ENCODE measurements at regions of chr16 and their contacts with region 1.

Region 1: GRCh38 chr16:52191531-52192134 is 355.3 kb downstream of the TOX3 start:
- DNase-seq: peak; percentile 58
- ATAC-seq: peak; percentile 88
- H3K4me3 ChIP-seq: no peak overlapping the region
- H3K27ac ChIP-seq: no peak overlapping the region
- H3K4me1 ChIP-seq: no peaks in the 10 kb centered on the region
- H3K27me3 ChIP-seq: no peaks in the 10 kb centered on the region
- CTCF ChIP-seq: peak; percentile 88
- POLR2A ChIP-seq: no peak
- RAD21 ChIP-seq: peak; percentile 74

Region 2: GRCh38 chr16:51818342-51818944 is 373.2 kb before region 1 on chr16:
- CTCF ChIA-PET with region 1: no interaction called
- POLR2A ChIA-PET with region 1: no interaction called
- dilution Hi-C with region 1: no loop called
- in situ Hi-C with region 1: no loop called
- intact Hi-C with region 1: loop called (anchors 2 kb)
- DNase-seq: peak; percentile 73
- ATAC-seq: peak; percentile 61
- H3K4me3 ChIP-seq: no peak overlapping the region
- H3K27ac ChIP-seq: peak overlapping the region; percentile 57
- H3K4me1 ChIP-seq: peaks cover 2% of the 10 kb centered on the region; the same call in 1 of the 2 replicates
- H3K27me3 ChIP-seq: no peaks in the 10 kb centered on the region
- CTCF ChIP-seq: peak; percentile 89
- POLR2A ChIP-seq: no peak
- RAD21 ChIP-seq: peak; percentile 91

Region 3: DNA sequence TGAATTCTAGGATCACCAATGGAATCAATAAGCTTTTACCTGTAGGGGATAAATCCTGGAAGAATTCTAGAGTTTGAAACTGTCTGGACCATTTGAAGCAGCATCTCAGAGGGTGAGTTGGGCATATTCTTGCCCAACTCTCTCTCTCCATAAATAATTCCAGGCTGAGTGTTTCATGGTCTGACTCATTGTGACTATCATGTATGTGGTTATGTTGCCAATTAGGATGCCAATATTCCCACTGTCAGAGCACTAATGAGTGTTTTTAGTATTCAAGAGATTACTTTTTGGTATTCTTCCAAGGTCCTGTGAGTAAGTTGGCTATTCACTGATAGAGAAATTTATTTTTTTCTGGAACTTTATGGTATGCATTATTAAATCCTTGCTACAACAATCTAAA is 101.6 kb before region 1 on chr16:
- CTCF ChIA-PET with region 1: no interaction called
- POLR2A ChIA-PET with region 1: no interaction called
- dilution Hi-C with region 1: no loop called
- in situ Hi-C with region 1: loop called (anchors 25 kb)
- intact Hi-C with region 1: no loop called
- DNase-seq: peak; percentile 0
- ATAC-seq: no peak
- H3K4me3 ChIP-seq: no peak overlapping the region
- H3K27ac ChIP-seq: no peak overlapping the region
- H3K4me1 ChIP-seq: no peaks in the 10 kb centered on the region
- H3K27me3 ChIP-seq: no peaks in the 10 kb centered on the region
- CTCF ChIP-seq: no peak
- POLR2A ChIP-seq: no peak
- RAD21 ChIP-seq: no peak

Region 4: GRCh38 chr16:52912565-52913173 is 721.0 kb after region 1 on chr16:
- CTCF ChIA-PET with region 1: interaction called, 7 read pairs
- POLR2A ChIA-PET with region 1: no interaction called
- dilution Hi-C with region 1: no loop called
- in situ Hi-C with region 1: loop called (anchors 25 kb)
- intact Hi-C with region 1: loop called (anchors 1 kb)
- DNase-seq: peak; percentile 49
- ATAC-seq: peak; percentile 54; the same call in 1 of the 2 replicates
- H3K4me3 ChIP-seq: no peak overlapping the region
- H3K27ac ChIP-seq: no peak overlapping the region
- H3K4me1 ChIP-seq: no peaks in the 10 kb centered on the region
- H3K27me3 ChIP-seq: no peaks in the 10 kb centered on the region
- CTCF ChIP-seq: peak; percentile 68
- POLR2A ChIP-seq: no peak
- RAD21 ChIP-seq: peak; percentile 65

Region 5: DNA sequence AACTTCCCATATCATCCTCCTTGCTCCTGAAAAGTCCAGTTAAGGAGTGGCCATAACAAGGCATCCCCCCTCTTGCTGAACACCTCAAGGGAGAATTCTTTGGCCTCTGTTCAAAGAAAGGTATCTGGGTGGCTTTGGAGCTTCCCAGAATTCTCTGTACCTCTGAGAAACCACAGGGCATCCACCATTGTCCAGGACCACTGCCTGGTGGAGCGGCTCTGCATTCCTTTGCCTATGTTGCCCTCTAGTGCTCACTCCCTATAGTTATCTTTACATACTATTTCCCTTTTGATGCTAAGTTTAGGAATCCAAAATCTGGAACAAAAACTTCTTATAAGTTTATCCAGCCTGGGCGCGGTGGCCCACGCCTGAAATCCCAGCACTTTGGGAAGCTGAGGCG is 830.7 kb after region 1 on chr16:
- CTCF ChIA-PET with region 1: interaction called, 12 read pairs
- POLR2A ChIA-PET with region 1: no interaction called
- dilution Hi-C with region 1: no loop called
- in situ Hi-C with region 1: loop called (anchors 10 kb)
- intact Hi-C with region 1: loop called (anchors 1 kb)
- DNase-seq: peak; percentile 43
- ATAC-seq: peak; percentile 99
- H3K4me3 ChIP-seq: no peak overlapping the region
- H3K27ac ChIP-seq: no peak overlapping the region
- H3K4me1 ChIP-seq: no peaks in the 10 kb centered on the region
- H3K27me3 ChIP-seq: no peaks in the 10 kb centered on the region
- CTCF ChIP-seq: peak; percentile 78
- POLR2A ChIP-seq: no peak
- RAD21 ChIP-seq: peak; percentile 87

Region 6: GRCh38 chr16:53404959-53405358 is 1213.3 kb after region 1 on chr16:
- CTCF ChIA-PET with region 1: no interaction called
- POLR2A ChIA-PET with region 1: no interaction called
- dilution Hi-C with region 1: no loop called
- in situ Hi-C with region 1: no loop called
- intact Hi-C with region 1: loop called (anchors 1 kb)
- DNase-seq: no peak
- ATAC-seq: no peak
- H3K4me3 ChIP-seq: no peak overlapping the region
- H3K27ac ChIP-seq: no peak overlapping the region
- H3K4me1 ChIP-seq: no peaks in the 10 kb centered on the region
- H3K27me3 ChIP-seq: no peaks in the 10 kb centered on the region
- CTCF ChIP-seq: peak; percentile 32
- POLR2A ChIP-seq: no peak
- RAD21 ChIP-seq: 0 out of 2 replicates have a peak, but pooled peaks have one; percentile 13

Region 7: DNA sequence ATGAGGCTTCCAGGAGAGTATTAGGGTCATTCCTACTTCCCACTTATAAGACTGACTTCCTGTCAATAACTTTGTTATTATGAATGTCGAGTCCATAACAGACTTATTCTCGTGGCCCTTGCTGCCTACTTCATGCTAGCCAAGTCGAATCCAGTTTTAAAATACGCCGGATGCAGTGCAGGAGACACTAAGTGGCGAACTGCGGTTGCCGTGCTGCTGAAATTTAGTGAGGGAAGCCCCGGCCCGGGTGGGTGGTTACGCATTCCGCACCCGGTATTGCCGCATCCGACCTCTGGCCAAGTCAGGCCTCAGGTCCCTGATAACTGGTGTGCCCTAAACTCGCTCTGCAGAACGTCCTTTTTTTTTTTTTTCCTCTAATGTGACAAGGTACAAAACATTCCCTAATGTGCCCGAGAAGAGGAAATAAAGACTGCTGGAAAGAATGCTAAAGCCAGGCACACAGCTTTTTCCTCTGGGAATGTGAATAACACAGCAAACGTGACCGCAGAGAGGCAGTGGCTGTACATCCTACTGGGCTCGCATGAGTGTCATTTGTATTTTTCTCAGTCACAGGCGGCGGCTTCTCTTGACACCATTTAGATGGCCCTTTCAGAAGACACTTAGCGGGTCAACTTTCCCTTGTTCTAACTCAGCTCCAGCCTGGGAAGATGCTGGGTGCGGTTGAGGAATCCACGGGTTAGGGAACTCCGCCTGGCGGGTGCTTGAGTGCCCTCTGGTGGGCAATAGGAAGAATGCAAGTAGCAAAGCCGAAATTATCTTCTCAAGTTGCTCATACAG is 1318.5 kb after region 1 on chr16:
- CTCF ChIA-PET with region 1: no interaction called
- POLR2A ChIA-PET with region 1: no interaction called
- dilution Hi-C with region 1: no loop called
- in situ Hi-C with region 1: no loop called
- intact Hi-C with region 1: loop called (anchors 10 kb)
- DNase-seq: peak; percentile 62
- ATAC-seq: peak; percentile 97
- H3K4me3 ChIP-seq: no peak overlapping the region
- H3K27ac ChIP-seq: no peak overlapping the region
- H3K4me1 ChIP-seq: no peaks in the 10 kb centered on the region
- H3K27me3 ChIP-seq: peaks cover 2% of the 10 kb centered on the region
- CTCF ChIP-seq: peak; percentile 93
- POLR2A ChIP-seq: no peak
- RAD21 ChIP-seq: peak; percentile 71